ENCODE measurements at regions of chr17 and their contacts with region 1.

Region 1: GRCh38 chr17:46139432-46140210 is 53.6 kb downstream of the KANSL1 start:
- DNase-seq: no peak
- ATAC-seq: peak; percentile 45
- H3K4me3 ChIP-seq: peak overlapping the region; percentile 41
- H3K27ac ChIP-seq: peak overlapping the region; percentile 36
- H3K4me1 ChIP-seq: peaks cover 81% of the 10 kb centered on the region
- H3K27me3 ChIP-seq: no peaks in the 10 kb centered on the region
- CTCF ChIP-seq: no peak
- EP300 ChIP-seq: no peak
- POLR2A ChIP-seq: no peak
- RAD21 ChIP-seq: no peak

Region 2: DNA sequence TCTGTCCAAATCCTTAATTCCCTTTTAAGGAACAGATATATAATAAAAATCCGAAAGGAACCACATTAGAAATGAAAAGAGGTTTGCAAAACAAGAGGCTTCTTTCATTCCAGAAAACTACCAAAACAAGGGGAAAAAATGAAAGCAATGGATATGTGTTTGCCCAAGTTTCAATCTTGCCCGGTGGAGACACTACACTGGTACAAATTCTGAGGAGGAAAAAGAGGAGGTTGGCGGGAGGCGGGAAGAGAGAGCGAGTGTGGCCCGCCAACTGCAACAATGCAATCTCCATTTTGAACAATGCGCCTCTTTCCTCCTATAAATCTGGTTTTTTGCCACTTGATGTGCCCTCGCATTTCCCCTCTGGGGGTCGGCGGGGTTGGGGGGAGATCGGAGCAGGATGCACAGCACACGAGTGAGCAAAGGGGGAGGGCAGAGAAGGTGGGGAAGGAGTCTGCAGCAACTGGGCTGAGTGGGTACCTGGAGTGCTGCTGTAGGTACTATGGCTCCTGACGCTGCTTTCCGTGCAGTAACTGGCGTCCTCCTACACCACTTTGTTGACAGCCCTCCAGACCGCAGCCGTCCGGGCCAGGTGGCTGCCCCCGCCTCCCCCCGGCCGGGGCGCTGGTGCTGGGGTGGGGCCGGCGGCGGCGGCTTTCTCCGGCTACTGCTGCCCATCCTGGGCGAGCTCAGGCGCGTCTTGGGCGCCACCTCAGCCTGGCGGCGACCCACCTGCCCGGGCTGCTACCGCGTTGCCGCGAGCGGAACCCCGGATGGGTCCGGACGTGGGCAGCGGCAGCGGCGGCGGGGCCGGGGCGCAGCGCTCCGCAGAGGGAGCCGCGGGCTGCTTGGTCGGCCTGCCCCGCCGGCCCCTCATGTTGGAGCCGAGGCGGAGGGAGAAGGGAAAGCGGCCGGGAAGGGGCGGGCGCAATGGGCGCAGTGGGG is 555.3 kb before region 1 on chr17:
- CTCF ChIA-PET with region 1: no interaction called
- POLR2A ChIA-PET with region 1: no interaction called
- RAD21 ChIA-PET with region 1: no interaction called
- SMC1A ChIA-PET with region 1: no interaction called
- in situ Hi-C with region 1: loop called (anchors 25 kb)
- intact Hi-C with region 1: no loop called
- DNase-seq: no peak
- ATAC-seq: peak; percentile 78
- H3K4me3 ChIP-seq: peak overlapping the region; percentile 73
- H3K27ac ChIP-seq: peak overlapping the region; percentile 84
- H3K4me1 ChIP-seq: peaks cover 12% of the 10 kb centered on the region; the same call in 1 of the 2 replicates
- H3K27me3 ChIP-seq: no peaks in the 10 kb centered on the region
- CTCF ChIP-seq: no peak
- EP300 ChIP-seq: no peak; a peak in 1 of 4 replicates
- POLR2A ChIP-seq: peak; percentile 82
- RAD21 ChIP-seq: no peak; the same call in 1 of the 2 replicates

Region 3: GRCh38 chr17:46097497-46097896 is 42.1 kb before region 1 on chr17:
- CTCF ChIA-PET with region 1: interaction called, 3 read pairs
- POLR2A ChIA-PET with region 1: interaction called, 5 read pairs
- RAD21 ChIA-PET with region 1: interaction called, 11 read pairs
- SMC1A ChIA-PET with region 1: interaction called, 12 read pairs
- in situ Hi-C with region 1: no loop called
- intact Hi-C with region 1: loop called (anchors 5 kb)
- DNase-seq: no peak
- ATAC-seq: no peak
- H3K4me3 ChIP-seq: no peak overlapping the region
- H3K27ac ChIP-seq: no peak overlapping the region
- H3K4me1 ChIP-seq: peaks cover 19% of the 10 kb centered on the region; the same call in 1 of the 2 replicates
- H3K27me3 ChIP-seq: no peaks in the 10 kb centered on the region
- CTCF ChIP-seq: no peak
- EP300 ChIP-seq: no peak
- POLR2A ChIP-seq: no peak
- RAD21 ChIP-seq: no peak

Region 4: GRCh38 chr17:46121841-46122485 is 17.7 kb before region 1 on chr17:
- CTCF ChIA-PET with region 1: interaction called, 15 read pairs
- POLR2A ChIA-PET with region 1: interaction called, 23 read pairs
- RAD21 ChIA-PET with region 1: interaction called, 33 read pairs
- SMC1A ChIA-PET with region 1: interaction called, 109 read pairs
- in situ Hi-C with region 1: no loop called
- intact Hi-C with region 1: no loop called
- DNase-seq: peak; percentile 65
- ATAC-seq: peak; percentile 81
- H3K4me3 ChIP-seq: peak overlapping the region; percentile 33
- H3K27ac ChIP-seq: peak overlapping the region; percentile 62
- H3K4me1 ChIP-seq: peaks cover 59% of the 10 kb centered on the region
- H3K27me3 ChIP-seq: no peaks in the 10 kb centered on the region
- CTCF ChIP-seq: no peak
- EP300 ChIP-seq: peak; percentile 33 to 59; a peak in 3 of 4 replicates
- POLR2A ChIP-seq: no peak
- RAD21 ChIP-seq: no peak

Region 5: GRCh38 chr17:46154151-46154816 is 14.7 kb after region 1 on chr17:
- CTCF ChIA-PET with region 1: interaction called, 64 read pairs
- POLR2A ChIA-PET with region 1: interaction called, 124 read pairs
- RAD21 ChIA-PET with region 1: interaction called, 130 read pairs
- SMC1A ChIA-PET with region 1: interaction called, 115 read pairs
- in situ Hi-C with region 1: no loop called
- intact Hi-C with region 1: loop called (anchors 2 kb)
- DNase-seq: no peak
- ATAC-seq: no peak
- H3K4me3 ChIP-seq: no peak overlapping the region
- H3K27ac ChIP-seq: peak overlapping the region; percentile 29
- H3K4me1 ChIP-seq: peaks cover 90% of the 10 kb centered on the region
- H3K27me3 ChIP-seq: no peaks in the 10 kb centered on the region
- CTCF ChIP-seq: no peak
- EP300 ChIP-seq: no peak
- POLR2A ChIP-seq: no peak
- RAD21 ChIP-seq: no peak

Region 6: DNA sequence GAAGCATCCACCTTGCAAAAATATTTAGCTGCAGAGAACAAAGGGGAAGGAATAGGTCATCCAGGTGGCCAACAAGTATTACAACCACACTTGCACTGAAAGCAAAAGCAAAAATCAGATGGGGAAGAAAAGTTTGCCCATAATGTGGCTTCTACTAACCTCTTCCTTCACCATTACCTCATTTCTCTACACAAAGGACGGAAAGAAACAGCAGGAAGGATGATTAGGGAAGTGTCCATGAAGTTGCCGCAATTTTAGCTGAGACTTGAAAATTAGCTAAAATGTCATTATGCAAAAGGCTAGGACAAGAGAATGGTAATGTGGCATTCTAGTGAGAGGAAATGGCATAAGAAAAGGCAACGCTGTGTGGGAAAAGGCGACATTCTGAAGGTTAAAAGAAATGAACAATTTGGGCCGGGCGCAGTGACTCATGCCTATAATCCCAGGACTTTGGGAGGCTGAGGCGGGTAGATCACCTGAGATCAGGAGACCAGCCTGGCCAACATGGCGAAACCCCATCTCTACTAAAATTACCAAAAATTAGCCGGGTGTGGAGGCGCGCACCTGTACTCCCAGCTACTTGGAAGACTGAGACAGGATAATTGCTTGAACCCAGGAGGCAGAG is 39.9 kb after region 1 on chr17:
- CTCF ChIA-PET with region 1: interaction called, 110 read pairs
- POLR2A ChIA-PET with region 1: interaction called, 11 read pairs
- RAD21 ChIA-PET with region 1: interaction called, 100 read pairs
- SMC1A ChIA-PET with region 1: interaction called, 207 read pairs
- in situ Hi-C with region 1: no loop called
- intact Hi-C with region 1: no loop called
- DNase-seq: peak; percentile 73
- ATAC-seq: peak; percentile 79
- H3K4me3 ChIP-seq: peak overlapping the region; percentile 17; the same call in 1 of the 2 replicates
- H3K27ac ChIP-seq: peak overlapping the region; percentile 29
- H3K4me1 ChIP-seq: peaks cover 50% of the 10 kb centered on the region
- H3K27me3 ChIP-seq: no peaks in the 10 kb centered on the region
- CTCF ChIP-seq: no peak
- EP300 ChIP-seq: peak in 1 of 2 experiments; percentile 45; a peak in 1 of 4 replicates
- POLR2A ChIP-seq: no peak
- RAD21 ChIP-seq: no peak

Region 7: DNA sequence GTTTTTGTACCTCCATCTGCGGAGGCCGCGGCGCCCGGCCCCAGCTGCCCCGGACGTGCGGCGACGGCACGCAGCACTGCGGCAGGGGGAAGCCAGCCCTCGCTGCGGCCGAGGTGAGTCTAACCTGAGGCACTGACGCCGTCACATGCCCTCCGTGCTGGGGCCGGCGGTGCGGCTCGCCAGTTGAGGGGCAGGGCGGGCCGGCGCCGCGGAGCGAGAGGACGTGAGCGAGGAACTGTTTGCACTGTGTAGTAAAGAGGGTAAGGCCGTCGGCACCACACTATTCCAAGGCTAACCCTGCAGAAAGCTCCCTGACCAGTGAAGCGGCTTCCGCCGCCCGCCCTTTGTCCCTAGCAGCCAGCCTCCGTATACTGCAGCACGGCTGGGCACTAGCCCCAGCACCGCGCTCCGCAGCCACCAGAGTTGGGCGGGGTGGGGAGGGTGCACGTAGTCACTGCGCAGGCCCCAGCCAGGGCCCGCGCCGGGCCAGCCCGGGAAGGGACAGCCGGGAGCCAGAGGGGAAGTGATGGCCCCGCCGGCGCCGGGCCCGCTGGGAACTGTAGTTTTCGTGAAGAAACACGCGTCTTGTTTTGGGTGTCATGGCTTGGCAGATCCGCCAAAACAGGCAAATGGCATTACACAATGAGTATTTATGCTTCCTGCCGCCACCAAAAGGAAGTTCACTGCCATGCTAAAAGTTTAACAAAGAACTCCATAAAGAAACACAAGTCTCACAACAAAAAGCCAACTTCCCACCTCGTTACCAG is 54.2 kb after region 1 on chr17:
- CTCF ChIA-PET with region 1: interaction called, 110 read pairs
- POLR2A ChIA-PET with region 1: interaction called, 4 read pairs
- RAD21 ChIA-PET with region 1: interaction called, 16 read pairs
- SMC1A ChIA-PET with region 1: interaction called, 207 read pairs
- in situ Hi-C with region 1: no loop called
- intact Hi-C with region 1: no loop called
- DNase-seq: peak; percentile 88
- ATAC-seq: peak; percentile 90
- H3K4me3 ChIP-seq: peak overlapping the region; percentile 87
- H3K27ac ChIP-seq: peak overlapping the region; percentile 98
- H3K4me1 ChIP-seq: peaks cover 32% of the 10 kb centered on the region
- H3K27me3 ChIP-seq: no peaks in the 10 kb centered on the region
- CTCF ChIP-seq: peak in 2 of 3 experiments; percentile 13 to 26; a peak in 3 of 6 replicates
- EP300 ChIP-seq: peak in 1 of 2 experiments; percentile 7; a peak in 1 of 4 replicates
- POLR2A ChIP-seq: peak; percentile 85
- RAD21 ChIP-seq: no peak

Measured in GM12878 (cell line).